PC-3 (cell line): ENCODE measurements at regions of chr19 and their contacts with region 1.

Region 1: GRCh38 chr19:10332955-10333757 is at the start of gene RAVER1:
- DNase-seq: peak; percentile 98
- ATAC-seq: peak; percentile 76
- H3K4me3 ChIP-seq: peak within 1 kb of the TSS; percentile 84
- H3K27ac ChIP-seq: peak within 1 kb of the TSS; percentile 55
- H3K4me1 ChIP-seq: peaks cover 22% of the 10 kb centered on the region
- H3K27me3 ChIP-seq: no peaks in the 10 kb centered on the region
- CTCF ChIP-seq: no peak
- total RNA-seq, gene RAVER1: 62.4 and 81.8 TPM in 2 replicates

Region 2: GRCh38 chr19:10269333-10270179 is 63.6 kb before region 1 on chr19:
- CTCF ChIA-PET with region 1: interaction called, 15 read pairs
- POLR2A ChIA-PET with region 1: interaction called, 11 read pairs
- intact Hi-C with region 1: loop called (anchors 1 kb)
- DNase-seq: peak; percentile 88
- ATAC-seq: peak; percentile 70
- H3K4me3 ChIP-seq: peak overlapping the region; percentile 64
- H3K27ac ChIP-seq: no peak overlapping the region
- H3K4me1 ChIP-seq: peaks cover 23% of the 10 kb centered on the region
- H3K27me3 ChIP-seq: no peaks in the 10 kb centered on the region
- CTCF ChIP-seq: peak; percentile 95

Region 3: GRCh38 chr19:10292206-10292788 is 40.9 kb before region 1 on chr19:
- CTCF ChIA-PET with region 1: no interaction called
- POLR2A ChIA-PET with region 1: interaction called, 10 read pairs
- intact Hi-C with region 1: no loop called
- DNase-seq: peak; percentile 83
- ATAC-seq: peak; percentile 49
- H3K4me3 ChIP-seq: peak overlapping the region; percentile 69
- H3K27ac ChIP-seq: no peak overlapping the region
- H3K4me1 ChIP-seq: peaks cover 29% of the 10 kb centered on the region
- H3K27me3 ChIP-seq: peaks cover 19% of the 10 kb centered on the region; the same call in 1 of the 2 replicates
- CTCF ChIP-seq: no peak

Region 4: DNA sequence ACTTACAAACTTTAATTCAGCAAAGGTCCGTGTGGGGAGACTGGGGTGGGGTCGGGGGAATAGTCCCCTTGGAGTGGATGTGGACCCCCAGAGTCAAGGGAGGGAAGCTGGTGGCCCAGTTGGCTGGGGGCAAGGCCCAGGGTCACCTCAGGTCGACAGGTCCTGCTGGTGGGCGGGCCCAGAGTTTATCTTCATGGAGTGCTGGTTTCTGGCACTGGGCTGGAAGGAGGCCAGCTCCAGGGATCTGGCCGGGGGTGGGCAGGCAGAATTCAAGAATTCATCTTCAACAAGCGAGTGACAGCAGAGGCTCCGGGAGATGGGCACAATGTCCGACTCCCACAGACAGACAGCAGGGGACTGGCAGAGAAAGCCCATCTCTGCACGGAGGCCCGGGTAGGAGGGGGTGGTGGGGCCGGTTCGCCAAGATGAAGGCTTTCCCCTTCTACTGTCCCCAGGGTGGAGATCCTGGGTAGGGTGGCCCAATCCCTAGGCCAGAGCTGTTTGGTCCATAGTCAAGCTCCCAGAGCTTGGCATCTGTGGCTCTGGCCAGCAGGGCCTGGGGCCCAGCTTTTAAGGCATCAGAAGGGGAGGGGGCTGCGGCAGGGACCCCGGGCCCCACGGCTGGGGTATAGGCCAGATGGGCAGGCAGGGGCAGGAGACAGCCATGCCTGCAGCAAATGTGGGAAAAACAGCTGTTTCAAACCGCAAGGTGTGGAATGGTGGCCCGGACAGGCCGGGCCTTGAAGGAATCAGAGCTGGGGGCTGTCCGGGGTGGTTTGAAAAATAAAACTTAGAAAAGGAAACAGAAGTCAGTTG is 16.7 kb before region 1 on chr19:
- CTCF ChIA-PET with region 1: no interaction called
- POLR2A ChIA-PET with region 1: interaction called, 26 read pairs
- intact Hi-C with region 1: no loop called
- DNase-seq: no peak
- ATAC-seq: no peak
- H3K4me3 ChIP-seq: peak overlapping the region; percentile 82
- H3K27ac ChIP-seq: no peak overlapping the region
- H3K4me1 ChIP-seq: peaks cover 10% of the 10 kb centered on the region; the same call in 1 of the 2 replicates
- H3K27me3 ChIP-seq: no peaks in the 10 kb centered on the region
- CTCF ChIP-seq: no peak

Region 5: GRCh38 chr19:10353793-10354391 is 20.7 kb after region 1 on chr19:
- CTCF ChIA-PET with region 1: no interaction called
- POLR2A ChIA-PET with region 1: no interaction called
- intact Hi-C with region 1: no loop called
- DNase-seq: peak; percentile 30
- ATAC-seq: 0 out of 2 replicates have a peak, but pooled peaks have one; percentile 20
- H3K4me3 ChIP-seq: no peak overlapping the region
- H3K27ac ChIP-seq: no peak overlapping the region
- H3K4me1 ChIP-seq: no peaks in the 10 kb centered on the region
- H3K27me3 ChIP-seq: no peaks in the 10 kb centered on the region
- CTCF ChIP-seq: no peak

Region 6: DNA sequence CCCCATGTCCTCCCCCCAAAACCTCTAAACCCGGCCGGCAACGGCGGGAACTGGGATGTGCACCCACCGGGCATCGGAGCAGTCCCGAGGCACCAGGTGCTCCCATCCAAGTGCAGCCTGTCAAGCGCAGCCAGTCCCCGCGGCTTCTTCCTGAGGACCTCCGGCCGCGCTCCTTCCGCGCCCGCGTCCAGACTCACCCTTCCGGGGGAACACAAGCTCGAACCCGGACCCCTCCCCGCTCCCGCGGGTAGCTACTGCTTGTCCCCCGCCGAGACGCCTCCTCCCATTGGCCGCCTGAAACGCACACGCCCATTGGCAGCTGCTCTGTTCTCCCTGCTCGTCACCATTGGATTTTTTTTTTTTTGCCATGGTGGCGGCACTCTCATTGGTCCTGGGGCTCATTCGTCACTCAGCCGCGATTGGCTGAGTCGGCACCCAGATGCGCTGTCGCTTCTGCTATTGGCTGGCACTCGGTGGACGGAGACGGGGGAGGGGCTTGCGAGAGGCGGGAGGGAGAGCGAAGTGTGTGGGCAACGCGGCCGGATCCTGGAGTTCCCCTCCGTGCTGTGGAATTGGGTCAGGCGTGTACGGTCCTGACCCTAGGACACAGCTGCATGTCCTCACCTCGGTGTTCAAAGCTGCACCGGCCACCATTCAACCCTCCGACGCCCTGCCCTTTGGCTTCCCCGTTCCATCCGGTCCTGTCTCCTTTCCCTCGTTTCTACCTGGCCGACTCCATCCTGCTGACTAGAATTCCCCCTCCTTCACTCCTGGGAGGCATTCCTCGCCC is 47.4 kb after region 1 on chr19 and contains the start of gene TYK2:
- CTCF ChIA-PET with region 1: no interaction called
- POLR2A ChIA-PET with region 1: interaction called, 4 read pairs
- intact Hi-C with region 1: loop called (anchors 10 kb)
- DNase-seq: peak; percentile 100
- ATAC-seq: peak; percentile 94
- H3K4me3 ChIP-seq: peak within 1 kb of the TSS; percentile 91
- H3K27ac ChIP-seq: peak within 1 kb of the TSS; percentile 40
- H3K4me1 ChIP-seq: peaks cover 9% of the 10 kb centered on the region
- H3K27me3 ChIP-seq: no peaks in the 10 kb centered on the region
- CTCF ChIP-seq: no peak
- total RNA-seq, gene TYK2: 177 and 201 TPM in 2 replicates

Region 7: DNA sequence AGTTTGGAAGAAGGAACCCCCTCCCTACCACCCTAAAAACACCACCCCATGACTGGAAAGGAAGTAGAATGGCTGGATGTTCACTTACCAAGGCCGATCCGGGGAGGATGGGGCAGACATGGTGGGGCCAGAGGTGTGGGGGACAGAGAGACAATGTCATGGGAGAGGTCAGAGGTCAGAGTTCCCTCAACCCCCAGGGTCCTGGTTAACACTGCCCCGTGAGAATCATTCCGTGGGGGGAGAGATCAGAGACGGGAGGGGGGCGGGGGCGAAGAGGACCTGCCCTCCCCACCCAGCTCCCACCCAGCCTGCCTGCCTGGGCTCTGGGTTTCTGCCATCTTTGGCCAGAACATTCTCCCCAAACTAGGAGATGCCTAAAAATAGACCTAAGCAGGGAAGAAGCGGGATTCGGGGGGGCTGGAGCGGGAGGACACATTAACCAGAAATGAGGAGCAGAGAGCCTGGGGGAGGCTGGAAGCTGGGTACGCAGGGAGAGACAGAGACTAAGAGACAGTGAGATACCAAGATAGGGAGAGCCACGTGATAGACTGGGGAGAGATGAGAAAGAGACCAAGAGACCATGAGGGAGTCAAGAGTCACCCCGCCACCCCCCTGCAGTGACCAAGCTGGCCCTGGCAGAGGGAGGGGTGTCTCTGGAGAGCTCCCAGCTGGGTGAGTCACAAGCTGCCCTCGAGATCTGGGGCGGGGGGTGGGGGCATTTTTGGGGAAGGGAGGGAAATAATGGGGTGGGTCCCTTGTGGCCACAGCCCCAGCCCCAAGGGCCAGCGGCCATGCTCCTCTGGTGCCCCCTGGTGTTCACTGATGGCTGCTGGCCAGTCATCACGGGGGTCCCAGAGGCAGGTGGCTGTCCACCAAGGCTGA is 870.3 kb after region 1 on chr19:
- CTCF ChIA-PET with region 1: no interaction called
- POLR2A ChIA-PET with region 1: interaction called, 22 read pairs
- intact Hi-C with region 1: no loop called
- DNase-seq: peak; percentile 79
- ATAC-seq: peak; percentile 82
- H3K4me3 ChIP-seq: no peak overlapping the region
- H3K27ac ChIP-seq: peak overlapping the region; percentile 15; the same call in 1 of the 2 replicates
- H3K4me1 ChIP-seq: peaks cover 11% of the 10 kb centered on the region
- H3K27me3 ChIP-seq: no peaks in the 10 kb centered on the region
- CTCF ChIP-seq: peak; percentile 90